Heart right ventricle (tissue), 16 donors: ENCODE measurements at regions of chr4 and their contacts with region 1.

Region 1: GRCh38 chr4:55214172-55214571 is 88.8 kb upstream of the KDR start:
- DNase-seq: no peak
- ATAC-seq: peak in 6 of 8 donors; percentile 27 to 82 (median 55)
- H3K4me3 ChIP-seq: no peak overlapping the region
- H3K27ac ChIP-seq: peak overlapping the region in 3 of 10 donors; percentile 12 to 40 (median 17)
- H3K4me1 ChIP-seq: peaks cover 0 to 19% (median 8%) of the 10 kb centered on the region in 9 donors
- H3K27me3 ChIP-seq: no peaks in the 10 kb centered on the region
- CTCF ChIP-seq: no peak

Region 2: GRCh38 chr4:55291227-55291640 is 77.1 kb after region 1 on chr4:
- intact Hi-C with region 1: loop called in 1 of 10 experiments (anchors 10 kb)
- DNase-seq: peak; percentile 19 to 47
- ATAC-seq: peak in 7 of 8 donors; percentile 61 to 81 (median 74)
- H3K4me3 ChIP-seq: no peak overlapping the region
- H3K27ac ChIP-seq: no peak overlapping the region
- H3K4me1 ChIP-seq: peaks cover 0 to 9% (median 0%) of the 10 kb centered on the region in 9 donors
- H3K27me3 ChIP-seq: no peaks in the 10 kb centered on the region
- CTCF ChIP-seq: no peak

Region 3: GRCh38 chr4:55781812-55782211 is 567.6 kb after region 1 on chr4:
- intact Hi-C with region 1: no loop called
- DNase-seq: no peak
- ATAC-seq: no peak
- H3K4me3 ChIP-seq: no peak overlapping the region
- H3K27ac ChIP-seq: no peak overlapping the region
- H3K4me1 ChIP-seq: no peaks in the 10 kb centered on the region
- H3K27me3 ChIP-seq: peaks cover 0 to 8% (median 0%) of the 10 kb centered on the region in 7 donors
- CTCF ChIP-seq: no peak